ENCODE measurements at regions of chr11 and their contacts with region 1.

Region 1: DNA sequence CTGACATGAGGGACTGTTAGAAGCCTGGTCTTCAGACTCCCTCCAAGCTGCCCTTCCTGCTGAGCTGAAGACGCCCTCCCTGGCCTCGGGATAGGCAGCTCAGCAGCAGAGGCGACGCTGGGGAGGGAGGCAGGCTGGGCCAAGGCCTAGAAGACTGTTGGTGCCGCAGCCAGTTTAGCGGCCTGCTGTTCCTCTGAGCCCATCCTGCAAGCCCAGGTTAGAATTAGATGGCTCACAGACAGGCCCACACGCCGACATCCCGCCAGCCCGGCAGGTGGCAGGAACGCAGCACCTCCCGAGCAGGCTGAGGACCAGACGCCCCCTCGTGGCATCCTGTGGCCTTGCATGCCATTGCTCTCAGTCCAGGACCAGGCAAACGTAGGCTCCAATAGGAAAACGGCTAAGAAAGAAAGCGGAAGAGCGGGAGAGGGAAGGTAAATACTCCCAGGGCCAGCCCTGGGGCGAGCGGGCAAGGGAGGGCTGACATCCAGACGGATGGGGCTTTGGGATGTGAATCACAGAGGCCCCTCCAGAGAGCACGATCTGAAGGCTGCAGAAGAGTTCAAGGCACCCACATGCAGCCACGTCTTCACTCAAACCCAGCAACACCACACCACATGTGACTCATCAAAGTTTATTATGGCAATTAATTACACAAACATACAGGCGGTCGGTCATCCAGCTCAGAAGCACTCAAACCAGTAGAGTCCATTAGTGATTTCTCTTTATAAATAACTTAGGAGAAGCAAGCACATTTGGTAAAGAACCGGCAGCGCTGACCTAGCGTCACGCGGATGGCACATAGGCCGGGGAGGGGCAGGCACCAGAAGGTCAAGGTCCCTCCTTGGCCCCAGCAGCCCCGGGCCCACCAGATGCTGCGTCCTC is 27.6 kb downstream of the CD5 start:
- DNase-seq: peak; percentile 84 to 92
- ATAC-seq: peak; percentile 91

Region 2: DNA sequence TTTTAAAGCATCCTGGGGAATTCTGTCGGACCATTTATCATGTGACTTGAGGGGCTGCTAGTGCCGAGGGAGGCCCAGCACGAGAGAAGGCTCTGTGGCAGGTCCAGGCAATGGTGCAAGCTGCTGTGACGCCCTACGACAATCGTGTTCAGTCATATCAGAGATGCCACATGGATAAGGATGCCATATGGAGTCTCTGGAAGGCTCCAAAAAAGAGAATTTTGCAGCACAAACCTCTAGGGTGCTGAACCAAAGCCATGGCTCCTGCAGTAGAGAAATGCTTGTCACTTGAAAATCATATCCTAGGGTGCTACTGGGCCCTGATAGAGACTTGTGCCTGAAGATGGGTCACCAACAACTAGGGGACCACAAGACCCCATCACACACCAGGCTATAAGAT is 165.1 kb before region 1 on chr11:
- intact Hi-C with region 1: loop called in 1 of 2 experiments (anchors 10 kb)
- DNase-seq: no peak
- ATAC-seq: no peak

Region 3: GRCh38 chr11:61187505-61188130 is 57.7 kb after region 1 on chr11:
- intact Hi-C with region 1: loop called in 1 of 2 experiments (anchors 5 kb)
- DNase-seq: peak; percentile 44 to 88
- ATAC-seq: peak; percentile 70